Heart right ventricle (tissue), 16 donors: ENCODE measurements at regions of chr18 and their contacts with region 1.

Region 1: GRCh38 chr18:31722369-31722957 is 38.1 kb upstream of the B4GALT6 start:
- DNase-seq: peak; percentile 50 to 81
- ATAC-seq: peak; percentile 79 to 88 (median 85)
- H3K4me3 ChIP-seq: no peak overlapping the region
- H3K27ac ChIP-seq: no peak overlapping the region
- H3K4me1 ChIP-seq: peaks cover 0 to 26% (median 12%) of the 10 kb centered on the region in 9 donors
- H3K27me3 ChIP-seq: peaks cover 0 to 38% (median 0%) of the 10 kb centered on the region in 7 donors
- CTCF ChIP-seq: peak; percentile 46 to 95 (median 89)

Region 2: DNA sequence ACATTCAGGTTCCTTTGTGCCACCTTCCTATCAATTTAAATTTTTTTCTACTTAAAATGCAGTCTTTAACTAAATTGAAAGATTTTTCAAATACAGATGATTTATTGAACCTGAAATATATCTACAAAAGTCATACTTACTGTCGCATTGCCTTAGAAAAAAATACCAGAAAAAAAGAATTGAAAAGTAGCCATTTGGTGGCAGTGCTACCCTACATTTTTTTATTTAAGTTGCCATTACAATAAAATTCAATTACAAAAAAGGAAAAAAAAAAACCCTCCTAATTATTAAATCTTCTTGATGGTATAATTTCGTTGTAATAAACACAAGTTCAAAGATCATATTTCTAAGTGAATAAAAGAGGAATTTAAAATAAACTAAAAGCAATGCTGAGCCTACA is 723.3 kb before region 1 on chr18:
- intact Hi-C with region 1: loop called in 2 of 10 experiments (anchors 10 kb)
- DNase-seq: no peak
- ATAC-seq: no peak
- H3K4me3 ChIP-seq: no peak overlapping the region
- H3K27ac ChIP-seq: no peak overlapping the region
- H3K4me1 ChIP-seq: no peaks in the 10 kb centered on the region
- H3K27me3 ChIP-seq: peaks cover 0 to 11% (median 0%) of the 10 kb centered on the region in 7 donors
- CTCF ChIP-seq: peak in 6 of 9 donors; percentile 2 to 45 (median 30)